ENCODE measurements at regions of chr12 and their contacts with region 1.

Region 1: DNA sequence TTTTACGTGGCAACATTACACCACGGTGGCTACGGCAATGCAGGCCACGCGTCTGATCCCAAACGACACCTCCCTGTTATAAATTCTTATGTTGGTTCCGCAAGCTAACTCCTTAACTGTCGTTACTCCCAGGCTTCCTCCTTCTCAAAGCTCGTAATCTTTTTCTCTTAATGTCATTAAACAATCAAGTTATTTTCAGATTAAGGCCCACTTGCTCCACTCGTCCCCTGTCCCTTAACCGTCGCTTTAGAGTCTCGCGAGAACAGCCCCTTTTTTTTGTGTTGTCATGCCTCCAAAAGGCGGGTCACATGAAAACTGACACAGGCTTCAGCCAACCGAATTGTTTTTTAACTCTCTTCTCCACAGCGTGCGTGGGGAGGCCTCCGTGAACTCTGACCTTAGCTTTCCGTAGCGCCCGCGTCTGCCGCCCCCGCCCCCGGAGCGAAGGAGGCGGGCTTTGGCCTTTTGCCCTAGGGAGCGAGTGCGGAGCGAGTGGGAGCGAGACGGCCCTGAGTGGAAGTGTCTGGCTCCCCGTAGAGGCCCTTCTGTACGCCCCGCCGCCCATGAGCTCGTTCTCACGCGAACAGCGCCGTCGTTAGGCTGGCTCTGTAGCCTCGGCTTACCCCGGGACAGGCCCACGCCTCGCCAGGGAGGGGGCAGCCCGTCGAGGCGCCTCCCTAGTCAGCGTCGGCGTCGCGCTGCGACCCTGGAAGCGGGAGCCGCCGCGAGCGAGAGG is at the start of gene CAND1:
- DNase-seq: peak; percentile 95
- H3K4me3 Mint-ChIP-seq: peak within 1 kb of the TSS; percentile 94
- H3K27ac Mint-ChIP-seq: peak within 1 kb of the TSS; percentile 92
- H3K4me1 Mint-ChIP-seq: peaks cover 44% of the 10 kb centered on the region
- H3K27me3 Mint-ChIP-seq: no peaks in the 10 kb centered on the region
- total RNA-seq, gene CAND1: 147 to 150 TPM

Region 2: GRCh38 chr12:67222302-67222701 is 46.8 kb before region 1 on chr12:
- CTCF ChIA-PET with region 1: no interaction called
- POLR2A ChIA-PET with region 1: no interaction called
- DNase-seq: no peak
- H3K4me3 Mint-ChIP-seq: no peak overlapping the region
- H3K27ac Mint-ChIP-seq: no peak overlapping the region
- H3K4me1 Mint-ChIP-seq: no peaks in the 10 kb centered on the region
- H3K27me3 Mint-ChIP-seq: no peaks in the 10 kb centered on the region

Region 3: GRCh38 chr12:67280572-67280971 is 11.5 kb after region 1 on chr12:
- CTCF ChIA-PET with region 1: interaction called, 4 read pairs
- POLR2A ChIA-PET with region 1: interaction called, 36 read pairs
- DNase-seq: no peak
- H3K4me3 Mint-ChIP-seq: no peak overlapping the region
- H3K27ac Mint-ChIP-seq: no peak overlapping the region
- H3K4me1 Mint-ChIP-seq: peaks cover 23% of the 10 kb centered on the region
- H3K27me3 Mint-ChIP-seq: no peaks in the 10 kb centered on the region

Region 4: GRCh38 chr12:67286257-67286656 is 17.2 kb after region 1 on chr12:
- CTCF ChIA-PET with region 1: no interaction called
- POLR2A ChIA-PET with region 1: interaction called, 36 read pairs
- DNase-seq: no peak
- H3K4me3 Mint-ChIP-seq: no peak overlapping the region
- H3K27ac Mint-ChIP-seq: no peak overlapping the region
- H3K4me1 Mint-ChIP-seq: peaks cover 23% of the 10 kb centered on the region
- H3K27me3 Mint-ChIP-seq: no peaks in the 10 kb centered on the region

Region 5: DNA sequence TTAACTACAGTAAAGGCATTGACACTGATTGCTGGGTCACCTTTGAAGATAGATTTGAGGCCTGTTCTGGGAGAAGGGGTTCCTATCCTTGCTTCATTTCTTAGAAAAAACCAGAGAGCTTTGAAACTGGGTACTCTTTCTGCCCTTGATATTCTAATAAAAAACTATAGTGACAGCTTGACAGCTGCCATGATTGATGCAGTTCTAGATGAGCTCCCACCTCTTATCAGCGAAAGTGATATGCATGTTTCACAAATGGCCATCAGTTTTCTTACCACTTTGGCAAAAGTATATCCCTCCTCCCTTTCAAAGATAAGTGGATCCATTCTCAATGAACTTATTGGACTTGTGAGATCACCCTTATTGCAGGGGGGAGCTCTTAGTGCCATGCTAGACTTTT is 36.5 kb after region 1 on chr12:
- CTCF ChIA-PET with region 1: interaction called, 4 read pairs
- POLR2A ChIA-PET with region 1: interaction called, 17 read pairs
- DNase-seq: no peak
- H3K4me3 Mint-ChIP-seq: no peak overlapping the region
- H3K27ac Mint-ChIP-seq: no peak overlapping the region
- H3K4me1 Mint-ChIP-seq: no peaks in the 10 kb centered on the region
- H3K27me3 Mint-ChIP-seq: no peaks in the 10 kb centered on the region

Region 6: GRCh38 chr12:67364228-67364627 is 95.2 kb after region 1 on chr12:
- CTCF ChIA-PET with region 1: no interaction called
- POLR2A ChIA-PET with region 1: no interaction called
- DNase-seq: no peak
- H3K4me3 Mint-ChIP-seq: no peak overlapping the region
- H3K27ac Mint-ChIP-seq: no peak overlapping the region
- H3K4me1 Mint-ChIP-seq: no peaks in the 10 kb centered on the region
- H3K27me3 Mint-ChIP-seq: no peaks in the 10 kb centered on the region

Region 7: DNA sequence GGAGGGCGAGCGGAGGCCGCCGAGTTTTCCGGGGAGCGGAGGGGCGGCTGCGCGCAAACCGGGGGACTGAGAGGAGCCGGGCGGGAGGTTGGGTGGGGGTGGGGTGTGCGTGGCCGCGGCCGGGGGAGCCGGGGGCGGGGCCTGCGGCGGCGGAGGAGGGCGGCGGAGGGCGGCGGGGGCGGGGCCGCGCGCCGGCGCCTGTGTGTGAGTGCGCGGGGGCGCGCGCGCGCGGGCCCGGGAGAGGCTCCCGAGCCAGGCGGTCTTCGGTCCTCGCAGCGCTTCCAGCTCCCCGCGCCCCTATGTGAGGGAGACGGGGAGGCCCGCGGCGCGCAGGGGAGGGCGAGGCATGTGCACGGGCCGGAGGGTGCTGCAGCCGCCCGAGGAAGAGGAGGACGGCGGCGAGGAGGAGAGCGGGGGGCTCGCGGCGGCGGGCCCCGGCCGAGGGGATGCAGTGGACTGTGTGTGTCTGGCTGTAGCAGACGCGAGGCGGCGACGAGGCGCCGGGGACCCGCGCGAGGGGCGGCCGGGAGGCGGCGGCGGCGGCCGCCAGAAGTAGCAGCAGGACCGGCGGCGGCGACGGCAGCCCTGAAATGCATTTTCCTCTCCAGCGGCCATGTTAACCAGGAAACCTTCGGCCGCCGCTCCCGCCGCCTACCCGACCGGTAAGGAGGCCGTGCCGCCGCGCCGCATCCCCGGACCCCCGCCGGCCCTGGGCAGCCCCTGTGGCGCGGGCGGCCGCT is 379.6 kb after region 1 on chr12 and contains the start of gene DYRK2:
- CTCF ChIA-PET with region 1: no interaction called
- POLR2A ChIA-PET with region 1: interaction called, 25 read pairs
- DNase-seq: peak; percentile 76
- H3K4me3 Mint-ChIP-seq: peak within 1 kb of the TSS; percentile 99
- H3K27ac Mint-ChIP-seq: peak within 1 kb of the TSS; percentile 82
- H3K4me1 Mint-ChIP-seq: peaks cover 30% of the 10 kb centered on the region
- H3K27me3 Mint-ChIP-seq: peaks cover 14% of the 10 kb centered on the region
- total RNA-seq, gene DYRK2: 49.5 to 53.5 TPM

Measured in activated CD4-positive, alpha-beta memory T cell treated with anti-CD3 and anti-CD28 coated beads, Interleukin-2, amount 10 ng/mL, durations not matched to agents 7 days and 5 days (primary cell).